B cell (primary cell): ENCODE measurements at regions of chr2 and their contacts with region 1.

Region 1: DNA sequence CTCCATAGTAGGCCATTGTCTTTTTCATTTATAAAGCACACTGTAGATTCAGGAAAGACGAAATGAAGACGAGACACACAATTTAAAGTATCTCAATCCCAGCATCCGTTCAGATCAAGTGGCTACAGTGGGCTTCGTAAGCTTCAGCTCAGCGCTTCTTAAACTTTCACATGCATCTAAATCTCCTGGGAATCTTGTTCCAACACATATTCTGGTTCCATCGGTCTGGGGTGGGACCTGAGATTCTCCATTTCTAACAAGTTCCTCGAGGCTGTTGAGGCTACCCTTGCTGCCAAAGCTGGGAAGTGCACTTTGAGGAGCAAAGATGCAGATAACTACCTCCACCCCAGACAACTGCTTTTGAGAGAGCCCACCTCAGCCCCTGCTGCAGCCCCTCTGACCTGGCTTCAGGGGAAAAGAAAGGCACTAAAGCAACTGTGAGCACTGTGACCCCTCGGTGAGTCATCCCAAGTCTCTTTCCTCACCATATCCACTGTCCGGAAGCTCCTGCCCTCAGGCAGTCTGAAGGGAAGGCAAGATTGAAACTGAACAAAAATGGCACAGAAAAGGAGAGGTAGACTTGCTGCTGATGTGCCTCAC is 201.1 kb upstream of the FBXO11 start:
- DNase-seq: peak; percentile 10
- ATAC-seq: no peak
- H3K4me3 ChIP-seq: no peak overlapping the region
- H3K4me3 Mint-ChIP-seq: no peak overlapping the region
- H3K27ac ChIP-seq: no peak overlapping the region
- H3K27ac Mint-ChIP-seq: no peak overlapping the region
- H3K4me1 ChIP-seq: peaks cover 7 to 16% of the 10 kb centered on the region in 2 donors
- H3K4me1 Mint-ChIP-seq: peaks cover 16% of the 10 kb centered on the region
- H3K27me3 ChIP-seq: no peaks in the 10 kb centered on the region
- H3K27me3 Mint-ChIP-seq: no peaks in the 10 kb centered on the region
- CTCF ChIP-seq: no peak

Region 2: GRCh38 chr2:46737577-46737976 is 1369.8 kb before region 1 on chr2:
- CTCF ChIA-PET with region 1: no interaction called
- POLR2A ChIA-PET with region 1: no interaction called
- intact Hi-C with region 1: no loop called
- DNase-seq: no peak
- ATAC-seq: no peak
- H3K4me3 ChIP-seq: no peak overlapping the region
- H3K4me3 Mint-ChIP-seq: no peak overlapping the region
- H3K27ac ChIP-seq: no peak overlapping the region
- H3K27ac Mint-ChIP-seq: no peak overlapping the region
- H3K4me1 ChIP-seq: no peaks in the 10 kb centered on the region
- H3K4me1 Mint-ChIP-seq: peaks cover 46% of the 10 kb centered on the region
- H3K27me3 ChIP-seq: no peaks in the 10 kb centered on the region
- H3K27me3 Mint-ChIP-seq: no peaks in the 10 kb centered on the region
- CTCF ChIP-seq: no peak

Region 3: GRCh38 chr2:47964277-47964676 is 143.1 kb before region 1 on chr2:
- CTCF ChIA-PET with region 1: no interaction called
- POLR2A ChIA-PET with region 1: no interaction called
- intact Hi-C with region 1: no loop called
- DNase-seq: no peak
- ATAC-seq: no peak
- H3K4me3 ChIP-seq: no peak overlapping the region
- H3K4me3 Mint-ChIP-seq: no peak overlapping the region
- H3K27ac ChIP-seq: no peak overlapping the region
- H3K27ac Mint-ChIP-seq: no peak overlapping the region
- H3K4me1 ChIP-seq: no peaks in the 10 kb centered on the region
- H3K4me1 Mint-ChIP-seq: no peaks in the 10 kb centered on the region
- H3K27me3 ChIP-seq: peaks cover 0 to 2% (median 0%) of the 10 kb centered on the region in 4 experiments
- H3K27me3 Mint-ChIP-seq: peaks cover 23% of the 10 kb centered on the region
- CTCF ChIP-seq: no peak

Region 4: DNA sequence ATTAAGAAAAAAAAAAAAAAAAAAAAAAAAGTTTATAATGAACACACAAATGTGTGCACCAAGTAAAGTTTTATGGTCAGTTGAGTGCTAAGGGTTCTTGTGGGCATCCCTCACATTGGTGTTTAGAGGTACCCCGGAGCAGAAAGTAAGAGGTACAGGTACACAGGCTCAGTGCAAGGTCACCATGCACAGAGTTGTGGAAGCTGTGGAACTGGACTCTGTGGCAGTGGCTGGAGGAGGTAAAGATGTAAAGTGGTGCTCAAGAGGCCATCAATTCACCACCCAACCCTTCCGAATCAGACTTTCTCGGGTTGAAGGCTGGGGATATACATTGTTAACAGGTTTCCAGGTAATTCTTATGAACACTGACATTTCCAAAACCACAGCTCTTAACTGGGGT is 123.4 kb after region 1 on chr2:
- CTCF ChIA-PET with region 1: no interaction called
- POLR2A ChIA-PET with region 1: interaction called, 11 read pairs
- intact Hi-C with region 1: no loop called
- DNase-seq: no peak
- ATAC-seq: no peak
- H3K4me3 ChIP-seq: no peak overlapping the region
- H3K4me3 Mint-ChIP-seq: no peak overlapping the region
- H3K27ac ChIP-seq: no peak overlapping the region
- H3K27ac Mint-ChIP-seq: no peak overlapping the region
- H3K4me1 ChIP-seq: peaks cover 20 to 24% of the 10 kb centered on the region in 2 donors
- H3K4me1 Mint-ChIP-seq: peaks cover 21% of the 10 kb centered on the region
- H3K27me3 ChIP-seq: no peaks in the 10 kb centered on the region
- H3K27me3 Mint-ChIP-seq: no peaks in the 10 kb centered on the region
- CTCF ChIP-seq: no peak

Region 5: DNA sequence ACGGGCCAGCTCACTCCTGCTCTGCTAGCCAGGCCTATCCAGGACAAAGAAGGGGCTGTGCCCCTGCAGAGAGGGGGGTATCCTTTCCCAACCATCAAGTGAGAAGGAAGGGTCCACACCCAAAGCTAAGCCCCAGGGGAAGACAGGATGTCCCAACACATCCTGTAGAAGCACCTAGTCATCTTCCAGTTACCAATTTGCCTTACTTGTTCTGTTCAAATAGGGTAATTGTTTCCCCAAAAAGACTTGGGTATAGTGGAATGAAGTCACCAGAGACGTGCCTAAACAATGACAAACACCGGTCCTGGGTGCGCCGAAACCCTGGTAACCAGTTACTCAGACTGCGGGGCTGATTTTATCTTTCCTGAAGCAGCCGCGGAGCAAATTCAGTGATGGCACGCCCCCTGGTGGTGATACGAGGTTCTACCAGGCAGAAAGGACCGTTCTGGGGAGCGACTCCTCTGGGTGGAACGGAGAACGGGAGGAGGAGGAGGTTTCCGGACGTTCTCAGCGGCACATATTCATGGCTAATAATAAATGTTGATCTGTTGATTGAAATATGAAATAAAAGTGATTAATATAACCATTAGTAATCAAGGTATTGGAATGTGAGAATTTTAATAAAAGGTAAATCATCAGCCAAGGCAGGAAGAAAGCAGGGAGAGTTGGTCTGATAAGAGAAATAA is 313.2 kb after region 1 on chr2:
- CTCF ChIA-PET with region 1: interaction called, 56 read pairs
- POLR2A ChIA-PET with region 1: interaction called, 4 read pairs
- intact Hi-C with region 1: loop called (anchors 1 kb)
- DNase-seq: peak; percentile 89
- ATAC-seq: peak; percentile 93
- H3K4me3 ChIP-seq: no peak overlapping the region
- H3K4me3 Mint-ChIP-seq: peak overlapping the region; percentile 58
- H3K27ac ChIP-seq: no peak overlapping the region
- H3K27ac Mint-ChIP-seq: no peak overlapping the region
- H3K4me1 ChIP-seq: peaks cover 15 to 16% of the 10 kb centered on the region in 2 donors
- H3K4me1 Mint-ChIP-seq: peaks cover 14% of the 10 kb centered on the region
- H3K27me3 ChIP-seq: no peaks in the 10 kb centered on the region
- H3K27me3 Mint-ChIP-seq: no peaks in the 10 kb centered on the region
- CTCF ChIP-seq: peak; percentile 96